ENCODE measurements at regions of chr1 and their contacts with region 1.

Region 1: DNA sequence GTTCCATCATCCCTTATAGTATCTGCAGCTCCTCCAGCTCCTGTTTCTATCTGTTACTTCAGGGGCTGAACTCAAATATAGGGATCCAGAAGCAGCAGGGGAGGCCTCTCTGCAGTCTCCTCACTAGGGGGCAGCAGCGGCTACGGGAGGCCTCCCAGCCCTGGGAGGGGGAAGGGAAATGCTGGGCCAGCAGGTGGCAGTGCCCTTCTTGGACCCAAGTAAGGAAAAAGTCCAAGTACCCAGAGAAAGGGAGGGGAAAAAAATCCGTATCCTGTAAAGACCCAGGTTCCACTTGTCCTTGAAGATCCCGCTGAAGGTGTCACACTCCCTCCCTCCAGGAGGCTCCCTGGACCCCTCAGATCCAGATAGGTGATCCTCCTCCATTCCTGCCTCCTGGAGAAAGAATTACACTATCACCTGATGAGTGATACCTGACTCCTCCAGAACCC is 14.1 kb upstream of the NUAK2 start:
- DNase-seq: peak; percentile 55 to 81 (median 71)
- ATAC-seq: peak; percentile 96
- H3K4me3 ChIP-seq: no peak overlapping the region
- H3K4me3 Mint-ChIP-seq: no peak overlapping the region
- H3K27ac ChIP-seq: no peak overlapping the region
- H3K27ac Mint-ChIP-seq: no peak overlapping the region
- H3K4me1 ChIP-seq: no peaks in the 10 kb centered on the region
- H3K4me1 Mint-ChIP-seq: peaks cover 0 to 5% (median 0%) of the 10 kb centered on the region in 7 donors
- H3K27me3 ChIP-seq: no peaks in the 10 kb centered on the region
- H3K27me3 Mint-ChIP-seq: peaks cover 0 to 40% (median 0%) of the 10 kb centered on the region in 5 donors

Region 2: GRCh38 chr1:205523891-205524793 is 188.5 kb after region 1 on chr1:
- CTCF ChIA-PET with region 1: interaction called, 36 read pairs
- POLR2A ChIA-PET with region 1: no interaction called
- intact Hi-C with region 1: loop called (anchors 1 kb)
- DNase-seq: peak; percentile 42 to 69 (median 62)
- ATAC-seq: peak; percentile 60
- H3K4me3 ChIP-seq: no peak overlapping the region
- H3K4me3 Mint-ChIP-seq: no peak overlapping the region
- H3K27ac ChIP-seq: no peak overlapping the region
- H3K27ac Mint-ChIP-seq: no peak overlapping the region
- H3K4me1 ChIP-seq: no peaks in the 10 kb centered on the region
- H3K4me1 Mint-ChIP-seq: peaks cover 0 to 3% (median 0%) of the 10 kb centered on the region in 7 donors
- H3K27me3 ChIP-seq: no peaks in the 10 kb centered on the region
- H3K27me3 Mint-ChIP-seq: peaks cover 0 to 4% (median 0%) of the 10 kb centered on the region in 5 donors

Region 3: GRCh38 chr1:205578780-205579606 is 243.3 kb after region 1 on chr1:
- CTCF ChIA-PET with region 1: no interaction called
- POLR2A ChIA-PET with region 1: no interaction called
- intact Hi-C with region 1: no loop called
- DNase-seq: no peak
- ATAC-seq: no peak
- H3K4me3 ChIP-seq: no peak overlapping the region
- H3K4me3 Mint-ChIP-seq: no peak overlapping the region
- H3K27ac ChIP-seq: no peak overlapping the region
- H3K27ac Mint-ChIP-seq: no peak overlapping the region
- H3K4me1 ChIP-seq: no peaks in the 10 kb centered on the region
- H3K4me1 Mint-ChIP-seq: peaks cover 0 to 7% (median 0%) of the 10 kb centered on the region in 7 donors
- H3K27me3 ChIP-seq: no peaks in the 10 kb centered on the region
- H3K27me3 Mint-ChIP-seq: peaks cover 15 to 36% (median 24%) of the 10 kb centered on the region in 5 donors